ENCODE measurements at regions of chr11 and their contacts with region 1.

Region 1: GRCh38 chr11:67630228-67630942 is 648 bp upstream of the NUDT8 start:
- DNase-seq: peak; percentile 100
- CTCF ChIP-seq: peak; percentile 70

Region 2: GRCh38 chr11:67572747-67573419 is 57.5 kb before region 1 on chr11:
- in situ Hi-C with region 1: no loop called
- DNase-seq: no peak
- CTCF ChIP-seq: peak; percentile 78

Region 3: GRCh38 chr11:67700548-67701262 is 70.3 kb after region 1 on chr11:
- in situ Hi-C with region 1: loop called (anchors 10 kb)
- DNase-seq: no peak
- CTCF ChIP-seq: no peak